Naive thymus-derived CD4-positive, alpha-beta T cell (primary cell): ENCODE measurements at regions of chr6 and their contacts with region 1.

Region 1: DNA sequence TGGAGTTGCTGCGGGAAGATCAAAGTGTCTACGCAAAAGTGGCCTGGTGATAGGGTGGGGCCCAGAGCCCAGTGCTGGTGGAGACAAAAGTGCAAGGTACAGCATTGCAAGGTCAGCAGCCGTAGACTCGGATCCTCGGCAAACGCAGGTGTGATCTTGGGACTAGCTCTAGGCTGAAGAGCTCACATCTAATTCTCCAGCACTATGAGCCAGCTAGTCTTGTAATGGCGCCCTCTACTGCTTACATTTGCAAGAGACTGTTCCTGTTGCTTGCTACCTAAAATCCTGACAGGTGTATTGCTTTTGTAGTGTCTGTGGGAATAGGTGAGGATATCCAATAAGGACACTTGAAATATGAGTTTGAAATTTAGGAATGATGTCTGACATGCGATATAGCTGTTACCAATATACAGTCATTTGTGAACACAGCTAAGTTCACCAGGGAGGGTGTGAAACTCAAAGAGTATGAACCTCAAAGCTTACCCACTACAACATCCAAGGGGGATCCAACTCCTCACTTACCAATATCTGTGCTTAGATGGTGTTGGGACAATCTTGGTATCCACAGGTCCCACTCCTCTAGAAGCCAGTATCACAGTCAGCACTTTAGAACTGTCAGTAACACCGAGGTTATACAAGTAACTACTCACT is 58.4 kb downstream of the PDE7B start:
- DNase-seq: peak; percentile 11 to 83 (median 73)
- ATAC-seq: peak; percentile 84
- H3K4me3 ChIP-seq: no peak overlapping the region
- H3K4me3 Mint-ChIP-seq: peak overlapping the region in 7 of 10 donors; percentile 46 to 77 (median 61)
- H3K27ac ChIP-seq: no peak overlapping the region
- H3K27ac Mint-ChIP-seq: peak overlapping the region in 3 of 9 donors; percentile 41 to 66 (median 43)
- H3K4me1 ChIP-seq: no peaks in the 10 kb centered on the region
- H3K4me1 Mint-ChIP-seq: peaks cover 0 to 19% (median 10%) of the 10 kb centered on the region in 7 donors
- H3K27me3 ChIP-seq: no peaks in the 10 kb centered on the region
- H3K27me3 Mint-ChIP-seq: no peaks in the 10 kb centered on the region

Region 2: DNA sequence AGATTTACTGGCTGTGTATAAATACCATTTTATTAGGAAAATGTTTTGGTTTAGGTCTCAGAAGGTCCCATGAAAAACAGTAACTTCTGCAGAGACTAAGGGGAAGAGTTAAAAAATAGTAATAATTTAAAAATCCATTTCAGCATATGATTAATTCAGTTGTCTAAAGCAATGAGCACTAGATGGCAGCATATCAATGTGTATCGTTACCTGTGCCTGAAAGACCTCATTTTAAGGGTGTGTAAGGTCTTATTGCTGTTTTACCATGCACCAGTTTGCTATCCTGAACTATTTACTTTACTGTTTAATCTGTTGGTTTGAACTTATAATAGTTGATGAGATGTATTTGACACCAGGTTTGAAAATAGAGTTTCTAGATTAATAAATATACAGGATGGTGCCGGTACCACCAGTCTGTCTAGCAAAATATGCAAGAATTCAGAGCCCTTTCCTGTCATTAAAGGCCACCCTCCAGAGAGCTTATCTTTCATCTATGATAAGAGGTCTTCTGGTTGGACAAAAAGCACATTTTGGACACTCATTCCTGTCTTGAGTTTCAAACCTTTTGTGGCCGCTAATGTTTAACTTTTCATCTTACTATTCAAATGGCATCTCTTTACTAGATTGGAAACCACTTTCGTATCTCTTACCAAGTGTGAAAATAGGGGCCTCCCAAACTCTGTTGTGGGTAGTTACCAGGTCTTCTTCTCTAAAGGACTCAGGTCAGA is 403.4 kb before region 1 on chr6:
- CTCF ChIA-PET with region 1: no interaction called
- POLR2A ChIA-PET with region 1: no interaction called
- intact Hi-C with region 1: loop called (anchors 1 kb)
- DNase-seq: peak in 7 of 9 donors; percentile 7 to 53 (median 33)
- ATAC-seq: peak; percentile 90
- H3K4me3 ChIP-seq: no peak overlapping the region
- H3K4me3 Mint-ChIP-seq: no peak overlapping the region
- H3K27ac ChIP-seq: no peak overlapping the region
- H3K27ac Mint-ChIP-seq: peak overlapping the region in 1 of 9 donors; percentile 33
- H3K4me1 ChIP-seq: peaks cover 0 to 6% of the 10 kb centered on the region in 2 donors
- H3K4me1 Mint-ChIP-seq: peaks cover 0 to 14% (median 0%) of the 10 kb centered on the region in 7 donors
- H3K27me3 ChIP-seq: no peaks in the 10 kb centered on the region
- H3K27me3 Mint-ChIP-seq: peaks cover 0 to 2% (median 0%) of the 10 kb centered on the region in 5 donors

Region 3: DNA sequence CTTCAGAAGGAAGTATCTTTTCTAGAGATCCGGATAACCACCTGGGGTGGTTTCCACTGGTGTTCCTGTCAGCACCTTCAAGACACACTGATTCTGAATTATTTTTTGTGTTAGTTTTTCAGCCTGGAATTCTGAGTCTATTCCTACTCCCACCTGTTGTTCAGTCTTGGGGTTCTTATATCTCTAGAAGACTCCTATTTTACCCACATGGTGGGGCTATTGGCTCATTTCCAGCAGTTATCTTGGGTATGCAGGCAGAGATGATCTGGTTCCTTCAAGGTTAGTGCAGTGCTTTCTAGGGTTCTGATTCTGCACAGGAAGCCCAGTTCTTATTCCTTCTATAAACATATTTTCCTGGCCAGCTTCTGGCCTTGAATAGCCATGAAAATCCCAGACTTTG is 234.0 kb before region 1 on chr6:
- CTCF ChIA-PET with region 1: interaction called, 44 read pairs
- POLR2A ChIA-PET with region 1: interaction called, 3 read pairs
- intact Hi-C with region 1: loop called (anchors 1 kb)
- DNase-seq: peak in 7 of 9 donors; percentile 51 to 71 (median 63)
- ATAC-seq: peak; percentile 79
- H3K4me3 ChIP-seq: no peak overlapping the region
- H3K4me3 Mint-ChIP-seq: no peak overlapping the region
- H3K27ac ChIP-seq: no peak overlapping the region
- H3K27ac Mint-ChIP-seq: peak overlapping the region in 2 of 9 donors; percentile 53 to 63
- H3K4me1 ChIP-seq: no peaks in the 10 kb centered on the region
- H3K4me1 Mint-ChIP-seq: peaks cover 0 to 39% (median 0%) of the 10 kb centered on the region in 7 donors
- H3K27me3 ChIP-seq: peaks cover 0 to 4% of the 10 kb centered on the region in 2 donors
- H3K27me3 Mint-ChIP-seq: no peaks in the 10 kb centered on the region

Region 4: DNA sequence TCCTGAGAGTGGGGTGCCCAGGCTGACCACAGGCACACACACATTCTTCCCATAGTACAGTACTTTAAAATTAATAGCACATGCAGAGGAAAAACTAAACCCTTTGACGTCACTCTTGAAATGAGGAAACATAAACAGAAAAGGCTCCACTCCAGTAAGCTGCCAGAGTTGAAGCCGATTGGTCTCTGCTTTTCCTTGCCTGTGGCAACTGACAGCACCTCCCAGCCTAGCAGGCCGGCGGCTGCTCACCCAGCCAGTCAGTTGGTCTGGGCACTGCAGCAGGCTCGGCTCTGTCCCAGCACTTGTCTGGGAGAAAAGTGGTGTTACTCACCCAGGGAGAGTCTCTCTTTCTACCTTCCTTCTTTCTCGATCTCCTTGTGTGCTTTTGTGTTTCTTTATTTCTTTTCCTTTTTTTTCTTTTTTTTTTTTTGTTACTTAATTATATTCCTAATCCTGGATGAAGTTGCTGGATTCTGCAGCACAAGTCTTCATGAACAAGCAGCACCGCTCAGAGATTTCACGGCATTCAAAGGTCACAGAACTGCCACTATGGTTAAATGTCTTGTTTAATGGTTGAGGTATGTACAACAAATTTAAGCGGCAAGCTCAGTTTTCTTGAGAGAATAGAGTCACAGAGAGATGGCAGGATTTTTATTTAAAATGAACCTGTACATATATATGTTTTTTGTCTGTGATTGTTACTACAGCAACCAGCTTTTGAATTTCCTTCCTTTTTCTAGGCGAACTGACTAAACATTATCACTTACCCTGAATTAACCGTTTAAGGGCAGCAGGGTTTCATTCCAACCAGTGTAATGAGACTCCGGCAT is 58.2 kb before region 1 on chr6 and contains the start of gene PDE7B:
- CTCF ChIA-PET with region 1: interaction called, 10 read pairs
- POLR2A ChIA-PET with region 1: interaction called, 3 read pairs
- intact Hi-C with region 1: loop called (anchors 2 kb)
- DNase-seq: peak; percentile 18 to 73 (median 46)
- ATAC-seq: peak; percentile 94
- H3K4me3 ChIP-seq: peak within 1 kb of the TSS; percentile 53
- H3K4me3 Mint-ChIP-seq: peak within 1 kb of the TSS in 9 of 10 donors; percentile 71 to 90 (median 87)
- H3K27ac ChIP-seq: peak within 1 kb of the TSS; percentile 75
- H3K27ac Mint-ChIP-seq: peak within 1 kb of the TSS in 6 of 9 donors; percentile 78 to 96 (median 88)
- H3K4me1 ChIP-seq: peaks cover 0 to 23% of the 10 kb centered on the region in 2 donors
- H3K4me1 Mint-ChIP-seq: peaks cover 5 to 47% (median 36%) of the 10 kb centered on the region in 7 donors
- H3K27me3 ChIP-seq: no peaks in the 10 kb centered on the region
- H3K27me3 Mint-ChIP-seq: no peaks in the 10 kb centered on the region
- total RNA-seq, gene PDE7B: 0.37 to 18.7 (median 1.7) TPM

Region 5: GRCh38 chr6:135880066-135880972 is 29.5 kb before region 1 on chr6:
- CTCF ChIA-PET with region 1: interaction called, 11 read pairs
- POLR2A ChIA-PET with region 1: interaction called, 7 read pairs
- intact Hi-C with region 1: loop called (anchors 1 kb)
- DNase-seq: peak in 8 of 9 donors; percentile 52 to 86 (median 79)
- ATAC-seq: peak; percentile 95
- H3K4me3 ChIP-seq: peak overlapping the region; percentile 40
- H3K4me3 Mint-ChIP-seq: peak overlapping the region; percentile 81 to 94 (median 86)
- H3K27ac ChIP-seq: peak overlapping the region; percentile 90
- H3K27ac Mint-ChIP-seq: peak overlapping the region; percentile 94 to 99 (median 98)
- H3K4me1 ChIP-seq: peaks cover 16 to 37% of the 10 kb centered on the region in 2 donors
- H3K4me1 Mint-ChIP-seq: peaks cover 31 to 90% (median 79%) of the 10 kb centered on the region in 7 donors
- H3K27me3 ChIP-seq: no peaks in the 10 kb centered on the region
- H3K27me3 Mint-ChIP-seq: no peaks in the 10 kb centered on the region

Region 6: GRCh38 chr6:136317021-136317694 is 407.3 kb after region 1 on chr6:
- CTCF ChIA-PET with region 1: no interaction called
- POLR2A ChIA-PET with region 1: no interaction called
- intact Hi-C with region 1: loop called in 1 of 2 experiments (anchors 1 kb)
- DNase-seq: peak; percentile 25 to 77 (median 66)
- ATAC-seq: peak; percentile 91
- H3K4me3 ChIP-seq: no peak overlapping the region
- H3K4me3 Mint-ChIP-seq: no peak overlapping the region
- H3K27ac ChIP-seq: no peak overlapping the region
- H3K27ac Mint-ChIP-seq: peak overlapping the region in 1 of 9 donors; percentile 19
- H3K4me1 ChIP-seq: no peaks in the 10 kb centered on the region
- H3K4me1 Mint-ChIP-seq: peaks cover 0 to 5% (median 0%) of the 10 kb centered on the region in 7 donors
- H3K27me3 ChIP-seq: no peaks in the 10 kb centered on the region
- H3K27me3 Mint-ChIP-seq: peaks cover 0 to 19% (median 0%) of the 10 kb centered on the region in 5 donors